ENCODE measurements at regions of chr17 and their contacts with region 1.

Region 1: DNA sequence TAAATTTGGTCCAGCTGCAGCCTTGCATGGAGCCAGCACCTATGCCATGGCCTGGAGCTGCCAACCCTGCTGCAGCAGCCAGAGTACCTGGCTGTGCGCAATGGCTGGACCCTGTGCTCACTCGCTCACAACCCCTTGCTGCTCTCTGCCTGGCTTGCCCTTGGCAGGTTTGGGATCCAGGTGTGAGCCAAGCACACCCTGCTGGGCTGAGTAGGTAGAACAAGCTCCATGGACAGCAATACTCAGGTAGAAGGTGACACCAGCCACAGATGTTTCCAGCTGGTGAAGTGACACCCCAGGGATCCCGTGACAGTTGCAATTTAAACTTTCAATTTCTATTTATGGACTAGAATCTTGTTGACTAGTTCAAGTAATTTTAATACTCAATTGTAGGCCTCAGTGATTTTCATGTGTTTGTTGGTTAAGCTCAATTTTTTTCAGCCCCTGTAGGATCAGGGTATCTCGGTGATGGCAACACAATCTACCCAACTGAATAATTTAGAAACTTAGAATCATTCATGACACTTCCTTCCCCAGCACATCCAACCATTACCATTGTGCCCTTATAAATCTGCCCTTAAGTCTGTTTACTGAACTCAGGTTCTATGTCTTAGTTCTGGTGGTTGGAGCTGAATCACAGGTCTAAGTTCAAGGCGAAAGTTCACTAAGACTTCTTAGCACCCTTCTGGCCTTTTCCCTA is 480.0 kb downstream of the PMP22 start:
- DNase-seq: peak; percentile 3 to 60 (median 33)
- ATAC-seq: peak; percentile 62
- H3K4me3 ChIP-seq: no peak overlapping the region
- H3K4me3 Mint-ChIP-seq: no peak overlapping the region
- H3K27ac ChIP-seq: no peak overlapping the region
- H3K27ac Mint-ChIP-seq: no peak overlapping the region
- H3K4me1 ChIP-seq: no peaks in the 10 kb centered on the region
- H3K4me1 Mint-ChIP-seq: no peaks in the 10 kb centered on the region
- H3K27me3 ChIP-seq: no peaks in the 10 kb centered on the region
- H3K27me3 Mint-ChIP-seq: peaks cover 2% of the 10 kb centered on the region
- CTCF ChIP-seq: peak; percentile 16

Region 2: DNA sequence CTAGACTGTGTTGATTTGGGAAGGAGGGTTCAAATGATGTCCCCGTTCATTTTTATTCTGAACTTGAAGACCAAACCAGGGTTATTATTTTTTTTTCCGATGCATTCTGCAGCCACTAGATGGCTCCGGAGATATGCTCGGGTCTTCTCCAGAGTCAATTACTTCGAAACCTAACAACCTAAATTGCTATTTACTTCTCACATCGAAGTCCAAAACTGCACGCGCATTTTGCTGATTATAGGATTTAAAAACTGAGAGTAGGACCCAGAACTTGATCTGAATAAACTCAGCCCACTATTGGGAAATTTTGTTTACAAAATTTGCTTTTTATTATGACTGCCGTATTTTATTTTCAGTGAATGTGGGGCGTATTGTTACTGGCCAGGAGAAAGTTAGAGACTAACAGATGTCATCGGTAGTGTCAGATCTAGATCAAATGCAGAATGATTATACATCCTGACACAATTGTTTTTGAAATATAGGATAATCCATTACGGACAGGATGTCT is 1447.2 kb before region 1 on chr17:
- CTCF ChIA-PET with region 1: interaction called, 3 read pairs
- POLR2A ChIA-PET with region 1: no interaction called
- intact Hi-C with region 1: loop called in 1 of 2 experiments (anchors 5 kb)
- DNase-seq: peak in 2 of 9 experiments; percentile 21 to 40
- ATAC-seq: no peak
- H3K4me3 ChIP-seq: no peak overlapping the region
- H3K4me3 Mint-ChIP-seq: peak overlapping the region; percentile 37
- H3K27ac ChIP-seq: no peak overlapping the region
- H3K27ac Mint-ChIP-seq: no peak overlapping the region
- H3K4me1 ChIP-seq: no peaks in the 10 kb centered on the region
- H3K4me1 Mint-ChIP-seq: peaks cover 4% of the 10 kb centered on the region
- H3K27me3 ChIP-seq: peaks cover 0 to 3% of the 10 kb centered on the region in 2 experiments
- H3K27me3 Mint-ChIP-seq: peaks cover 23% of the 10 kb centered on the region
- CTCF ChIP-seq: peak; percentile 61

Region 3: GRCh38 chr17:14211801-14212200 is 573.3 kb before region 1 on chr17:
- CTCF ChIA-PET with region 1: interaction called, 3 read pairs
- POLR2A ChIA-PET with region 1: no interaction called
- intact Hi-C with region 1: loop called (anchors 2 to 5 kb)
- DNase-seq: peak in 8 of 9 experiments; percentile 40 to 73 (median 60)
- ATAC-seq: peak; percentile 69
- H3K4me3 ChIP-seq: no peak overlapping the region
- H3K4me3 Mint-ChIP-seq: no peak overlapping the region
- H3K27ac ChIP-seq: no peak overlapping the region
- H3K27ac Mint-ChIP-seq: no peak overlapping the region
- H3K4me1 ChIP-seq: peaks cover 9% of the 10 kb centered on the region
- H3K4me1 Mint-ChIP-seq: peaks cover 27% of the 10 kb centered on the region
- H3K27me3 ChIP-seq: no peaks in the 10 kb centered on the region
- H3K27me3 Mint-ChIP-seq: no peaks in the 10 kb centered on the region
- CTCF ChIP-seq: peak; percentile 48

Region 4: GRCh38 chr17:14699574-14700180 is 85.5 kb before region 1 on chr17:
- CTCF ChIA-PET with region 1: no interaction called
- POLR2A ChIA-PET with region 1: no interaction called
- intact Hi-C with region 1: no loop called
- DNase-seq: no peak
- ATAC-seq: no peak
- H3K4me3 ChIP-seq: no peak overlapping the region
- H3K4me3 Mint-ChIP-seq: no peak overlapping the region
- H3K27ac ChIP-seq: no peak overlapping the region
- H3K27ac Mint-ChIP-seq: no peak overlapping the region
- H3K4me1 ChIP-seq: no peaks in the 10 kb centered on the region
- H3K4me1 Mint-ChIP-seq: no peaks in the 10 kb centered on the region
- H3K27me3 ChIP-seq: no peaks in the 10 kb centered on the region
- H3K27me3 Mint-ChIP-seq: no peaks in the 10 kb centered on the region
- CTCF ChIP-seq: no peak